K562 (cell line): ENCODE measurements at regions of chr1 and their contacts with region 1.

Region 1: DNA sequence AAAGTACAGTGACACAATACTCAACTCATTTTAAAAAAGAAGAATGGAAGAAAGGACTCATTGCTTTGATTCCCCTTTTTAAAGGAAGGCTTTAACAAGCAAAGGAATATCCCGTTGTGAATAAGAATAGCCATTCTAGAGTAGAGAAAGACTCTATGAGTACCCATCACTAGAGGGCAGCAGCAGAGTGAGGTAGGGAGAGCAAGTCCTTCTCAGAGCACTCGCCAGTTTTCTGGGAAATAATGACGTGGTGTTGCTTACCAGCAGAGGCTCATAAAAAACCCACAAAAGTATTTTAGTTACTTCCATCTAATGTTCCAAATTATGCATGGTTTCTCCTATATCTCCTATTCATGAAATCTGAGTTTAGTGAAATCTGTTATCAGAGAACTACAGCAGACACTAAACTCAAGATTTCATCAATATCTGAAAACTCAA is 74.6 kb downstream of the USP24 start:
- DNase-seq: peak; percentile 73 to 89 (median 77)
- ATAC-seq: peak; percentile 98
- H3K4me3 ChIP-seq: no peak overlapping the region
- H3K27ac ChIP-seq: no peak overlapping the region; the same call in 2 of the 3 replicates
- H3K4me1 ChIP-seq: peaks cover 0 to 6% of the 10 kb centered on the region in 2 experiments; a peak in 2 of 5 replicates
- H3K27me3 ChIP-seq: no peaks in the 10 kb centered on the region
- CTCF ChIP-seq: peak; percentile 80 to 91 (median 85)
- EP300 ChIP-seq: peak; percentile 48; the same call in 1 of the 2 replicates
- POLR2A ChIP-seq: no peak
- RAD21 ChIP-seq: peak; percentile 92 to 98

Region 2: DNA sequence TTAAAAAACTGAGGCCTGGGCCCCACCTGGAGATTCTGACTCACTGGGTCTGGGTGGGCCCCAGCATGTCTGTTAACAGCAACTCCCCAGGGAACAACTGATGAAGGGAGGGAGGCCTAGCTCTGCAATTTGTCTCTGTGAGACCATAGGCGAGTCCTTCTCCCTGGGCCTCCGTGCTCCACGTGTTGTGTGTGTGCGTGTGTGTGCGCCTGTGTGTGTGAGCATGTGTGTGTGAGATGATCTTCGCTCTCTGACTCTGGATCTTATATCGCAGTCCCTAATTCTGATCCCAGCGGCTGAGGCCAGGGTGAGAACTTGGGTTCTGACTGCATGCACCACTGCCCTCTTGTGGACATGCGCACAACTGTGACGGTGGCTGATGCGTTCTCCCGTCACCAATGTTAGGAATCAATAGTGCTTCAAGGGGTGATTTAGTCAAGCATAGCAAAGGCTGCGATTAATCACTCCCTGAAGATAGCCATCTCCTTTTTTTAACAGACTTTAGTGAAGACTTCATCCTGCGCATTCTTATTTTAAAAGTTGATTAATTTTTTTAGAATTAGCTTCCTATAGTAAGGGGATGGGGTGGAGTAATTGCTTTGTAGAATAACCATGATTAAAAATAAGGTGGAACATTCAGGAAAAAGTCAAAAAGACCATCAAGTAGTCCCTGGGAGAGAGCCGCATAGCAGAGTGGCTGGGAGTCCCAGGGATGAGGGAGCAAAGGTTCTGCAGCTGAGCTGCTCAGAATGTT is 137.0 kb after region 1 on chr1:
- CTCF ChIA-PET with region 1: interaction called, 44 read pairs
- POLR2A ChIA-PET with region 1: interaction called, 3 read pairs
- in situ Hi-C with region 1: loop called (anchors 5 kb)
- intact Hi-C with region 1: loop called (anchors 1 kb)
- DNase-seq: peak; percentile 80 to 91 (median 82)
- ATAC-seq: peak; percentile 90
- H3K4me3 ChIP-seq: no peak overlapping the region
- H3K27ac ChIP-seq: peak overlapping the region; percentile 79; the same call in 2 of the 3 replicates
- H3K4me1 ChIP-seq: peaks cover 19 to 33% of the 10 kb centered on the region in 2 experiments
- H3K27me3 ChIP-seq: no peaks in the 10 kb centered on the region
- CTCF ChIP-seq: peak; percentile 86 to 93 (median 88)
- EP300 ChIP-seq: peak; percentile 1; the same call in 1 of the 2 replicates
- POLR2A ChIP-seq: no peak
- RAD21 ChIP-seq: peak; percentile 87 to 96

Region 3: GRCh38 chr1:55337801-55338447 is 197.4 kb after region 1 on chr1:
- CTCF ChIA-PET with region 1: no interaction called
- POLR2A ChIA-PET with region 1: no interaction called
- in situ Hi-C with region 1: no loop called
- intact Hi-C with region 1: loop called (anchors 1 kb)
- DNase-seq: peak; percentile 31 to 62 (median 42)
- ATAC-seq: peak; percentile 95
- H3K4me3 ChIP-seq: no peak overlapping the region
- H3K27ac ChIP-seq: no peak overlapping the region
- H3K4me1 ChIP-seq: 0 out of 5 replicates have a peak, but pooled peaks cover 0 to 2% of the 10 kb centered on the region in 2 experiments
- H3K27me3 ChIP-seq: peaks cover 4 to 28% of the 10 kb centered on the region in 2 experiments; a peak in 3 of 5 replicates
- CTCF ChIP-seq: peak; percentile 57 to 80 (median 62)
- EP300 ChIP-seq: no peak
- POLR2A ChIP-seq: no peak
- RAD21 ChIP-seq: peak; percentile 62 to 75

Region 4: DNA sequence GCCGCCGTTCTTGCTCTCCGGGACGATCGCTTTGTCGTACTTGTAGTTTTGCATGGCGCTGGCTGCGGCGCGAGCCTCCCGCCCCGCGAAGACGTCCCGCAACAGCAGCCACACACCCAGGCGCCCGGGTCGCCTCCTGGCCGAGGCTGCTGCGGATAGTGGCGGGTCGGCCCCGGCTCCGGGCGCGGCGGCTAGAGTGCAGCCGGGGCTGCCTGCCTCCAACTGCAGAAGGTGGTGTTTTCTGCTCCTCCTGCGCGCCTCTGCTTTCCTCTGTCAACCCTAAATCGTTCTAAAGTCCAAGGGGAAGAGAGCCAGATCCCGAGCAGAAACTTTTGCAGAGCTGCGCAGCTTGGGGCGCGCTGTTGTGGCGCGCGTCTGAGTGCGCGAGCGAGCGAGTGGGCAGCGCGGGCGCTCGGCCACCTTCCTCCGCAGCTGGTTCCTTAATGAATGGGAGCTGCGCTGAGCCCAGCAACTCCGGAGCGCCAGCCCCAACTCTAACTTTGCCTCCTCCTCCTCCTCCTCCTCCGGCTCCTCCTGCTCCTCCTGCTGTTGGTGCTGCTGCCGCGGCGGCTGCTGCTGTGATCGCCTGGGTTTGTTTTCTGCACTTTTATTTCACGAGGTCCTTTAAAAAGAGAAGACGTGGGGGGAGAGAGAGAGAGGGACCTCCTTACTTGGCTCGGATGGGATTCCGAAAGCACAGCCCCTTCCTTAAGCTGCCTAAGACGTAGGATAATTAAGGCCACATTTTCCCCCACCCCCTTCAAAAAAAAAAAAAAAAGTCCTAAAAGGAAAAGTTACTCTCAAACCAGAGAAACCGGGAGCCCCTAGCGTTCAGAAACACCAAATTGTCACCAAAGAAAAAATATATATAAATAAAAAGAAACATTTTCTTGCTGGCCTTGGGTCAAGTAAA is 1438.7 kb after region 1 on chr1 and contains the start of gene PLPP3:
- CTCF ChIA-PET with region 1: no interaction called
- POLR2A ChIA-PET with region 1: no interaction called
- in situ Hi-C with region 1: loop called (anchors 25 kb)
- intact Hi-C with region 1: no loop called
- DNase-seq: peak in 3 of 4 experiments; percentile 15 to 27 (median 16)
- ATAC-seq: no peak; the same call in 2 of the 3 replicates
- H3K4me3 ChIP-seq: no peak within 1 kb of the TSS
- H3K27ac ChIP-seq: no peak within 1 kb of the TSS
- H3K4me1 ChIP-seq: peaks cover 0 to 13% of the 10 kb centered on the region in 2 experiments; a peak in 1 of 5 replicates
- H3K27me3 ChIP-seq: peaks cover 4 to 19% of the 10 kb centered on the region in 2 experiments; a peak in 3 of 5 replicates
- CTCF ChIP-seq: peak in 2 of 3 experiments; percentile 17 to 47; a peak in 3 of 6 replicates
- EP300 ChIP-seq: no peak
- POLR2A ChIP-seq: no peak
- RAD21 ChIP-seq: no peak
- polyA plus RNA-seq, gene PLPP3: 0.13 to 0.35 TPM